ENCODE measurements at regions of chr1 and their contacts with region 1.

Region 1: GRCh38 chr1:113811888-113812660 is at the start of gene RSBN1:
- DNase-seq: peak; percentile 95
- ATAC-seq: peak; percentile 94
- H3K4me3 Mint-ChIP-seq: peak within 1 kb of the TSS; percentile 94
- H3K27ac Mint-ChIP-seq: peak within 1 kb of the TSS; percentile 93
- H3K4me1 Mint-ChIP-seq: peaks cover 41% of the 10 kb centered on the region
- H3K27me3 Mint-ChIP-seq: no peaks in the 10 kb centered on the region
- CTCF ChIP-seq: no peak
- total RNA-seq, gene RSBN1: 26.4 and 29.1 TPM in 2 replicates

Region 2: DNA sequence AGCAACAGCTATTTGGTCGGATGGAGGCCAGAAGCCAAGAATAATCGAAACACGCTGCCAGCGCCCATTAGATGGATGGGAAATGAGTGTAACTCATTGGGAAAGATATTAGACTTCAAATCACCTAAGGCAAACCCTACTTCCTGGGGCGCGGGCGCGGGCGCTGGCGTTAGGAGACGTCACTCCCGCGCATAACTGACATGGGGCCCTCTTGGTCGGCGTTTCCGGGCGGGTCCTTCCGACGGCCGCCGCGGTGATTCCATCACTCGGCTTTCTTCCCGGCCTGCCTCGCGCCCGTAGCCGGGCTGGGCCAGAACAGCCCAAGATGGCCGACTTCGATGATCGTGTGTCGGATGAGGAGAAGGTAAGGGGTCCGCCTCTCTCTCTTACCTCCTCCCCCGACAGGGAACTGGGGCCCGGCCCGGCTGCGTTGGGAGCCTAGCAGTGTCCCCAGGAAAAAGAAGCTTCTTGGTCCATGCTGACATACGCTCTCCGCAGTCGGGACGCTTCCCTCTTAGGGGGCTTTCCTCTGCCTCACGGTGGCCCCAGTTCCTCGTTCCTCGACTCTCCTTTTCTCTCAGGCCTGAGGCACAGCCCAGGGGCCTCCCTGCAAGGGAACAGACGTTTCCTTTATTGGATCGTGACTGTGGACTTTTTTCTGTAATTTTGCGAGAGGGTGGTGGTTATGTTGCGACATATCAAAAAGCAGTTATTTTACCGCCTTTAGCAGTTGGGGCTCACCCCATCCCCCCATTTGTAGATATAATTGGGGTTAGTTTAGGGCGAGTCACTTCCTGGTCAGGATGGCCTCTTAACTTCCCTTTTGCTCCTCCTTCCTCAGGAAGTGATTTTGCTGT is 1192.3 kb before region 1 on chr1 and contains the start of gene CAPZA1:
- CTCF ChIA-PET with region 1: no interaction called
- POLR2A ChIA-PET with region 1: no interaction called
- intact Hi-C with region 1: loop called (anchors 1 kb)
- DNase-seq: peak; percentile 82
- ATAC-seq: peak; percentile 83
- H3K4me3 Mint-ChIP-seq: peak within 1 kb of the TSS; percentile 97
- H3K27ac Mint-ChIP-seq: peak within 1 kb of the TSS; percentile 99
- H3K4me1 Mint-ChIP-seq: peaks cover 54% of the 10 kb centered on the region
- H3K27me3 Mint-ChIP-seq: no peaks in the 10 kb centered on the region
- CTCF ChIP-seq: no peak
- total RNA-seq, gene CAPZA1: 221 and 227 TPM in 2 replicates

Region 3: GRCh38 chr1:113389953-113390834 is 421.9 kb before region 1 on chr1 and contains the start of gene MAGI3:
- CTCF ChIA-PET with region 1: no interaction called
- POLR2A ChIA-PET with region 1: no interaction called
- intact Hi-C with region 1: loop called (anchors 5 kb)
- DNase-seq: peak; percentile 83
- ATAC-seq: peak; percentile 98
- H3K4me3 Mint-ChIP-seq: peak within 1 kb of the TSS; percentile 95
- H3K27ac Mint-ChIP-seq: peak within 1 kb of the TSS; percentile 77
- H3K4me1 Mint-ChIP-seq: peaks cover 18% of the 10 kb centered on the region
- H3K27me3 Mint-ChIP-seq: peaks cover 29% of the 10 kb centered on the region
- CTCF ChIP-seq: no peak
- total RNA-seq, gene MAGI3: 0.83 and 1.0 TPM in 2 replicates

Region 4: DNA sequence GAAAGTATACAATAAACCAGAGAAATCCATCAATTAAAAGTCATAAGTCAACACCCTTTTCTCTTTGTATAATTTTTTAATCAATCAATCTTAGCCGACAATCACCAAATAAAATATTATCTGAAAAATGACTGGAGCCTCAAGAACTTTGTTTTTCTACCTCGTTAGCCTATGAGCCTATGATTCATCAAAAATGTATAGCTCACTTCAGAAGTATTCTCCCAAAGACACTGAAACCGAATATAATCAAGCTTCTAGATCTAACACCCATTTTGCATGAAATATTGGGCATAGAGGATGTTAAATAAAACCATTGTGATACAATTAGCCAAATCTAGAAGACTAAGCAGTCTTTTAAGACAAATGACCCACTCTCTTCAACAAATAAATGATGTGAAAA is 18.0 kb after region 1 on chr1:
- CTCF ChIA-PET with region 1: interaction called, 5 read pairs
- POLR2A ChIA-PET with region 1: no interaction called
- intact Hi-C with region 1: loop called (anchors 1 kb)
- DNase-seq: no peak
- ATAC-seq: no peak
- H3K4me3 Mint-ChIP-seq: no peak overlapping the region
- H3K27ac Mint-ChIP-seq: no peak overlapping the region
- H3K4me1 Mint-ChIP-seq: no peaks in the 10 kb centered on the region
- H3K27me3 Mint-ChIP-seq: no peaks in the 10 kb centered on the region
- CTCF ChIP-seq: no peak

Region 5: DNA sequence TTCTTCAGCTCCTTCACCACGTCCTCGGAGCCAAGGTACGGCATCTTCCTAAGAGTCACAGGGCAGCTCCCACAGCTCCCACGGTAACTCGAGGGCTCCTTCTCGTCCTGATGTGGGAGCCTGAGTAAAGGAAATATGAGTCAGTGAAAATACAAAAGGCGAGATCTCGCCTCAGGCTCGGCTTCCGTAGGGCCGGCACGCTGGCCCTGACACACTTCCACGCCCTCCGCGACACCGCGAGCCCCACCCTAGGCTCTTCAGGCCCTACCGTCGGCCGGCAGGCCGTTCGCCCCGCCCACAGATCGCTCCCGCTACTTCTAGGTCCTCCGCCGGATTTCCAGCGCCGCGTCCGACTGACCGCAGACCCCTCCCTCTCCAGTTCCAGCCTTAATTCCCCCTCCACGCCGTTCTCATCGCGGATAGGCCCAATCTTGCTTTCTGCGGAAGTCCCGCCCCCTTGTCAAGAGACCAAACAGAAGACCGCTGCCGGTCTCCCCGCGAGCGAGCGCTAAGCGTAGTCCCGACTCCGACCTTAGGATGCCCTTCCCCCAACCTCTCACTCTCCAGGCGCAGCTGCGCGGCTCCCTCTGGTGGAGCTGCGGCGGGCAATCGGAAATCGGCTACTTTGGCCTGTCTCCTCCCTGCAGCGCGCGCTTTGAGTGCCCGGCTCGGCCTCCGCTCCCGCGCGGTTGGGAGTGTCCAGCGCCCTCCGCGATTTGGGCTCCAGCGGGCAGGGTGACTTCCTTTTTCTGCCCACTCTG is 92.8 kb after region 1 on chr1 and contains the starts of genes AP4B1 and DCLRE1B:
- CTCF ChIA-PET with region 1: no interaction called
- POLR2A ChIA-PET with region 1: interaction called, 36 read pairs
- intact Hi-C with region 1: loop called (anchors 1 kb)
- DNase-seq: peak; percentile 89
- ATAC-seq: peak; percentile 91
- H3K4me3 Mint-ChIP-seq: peak within 1 kb of the TSS; percentile 94
- H3K27ac Mint-ChIP-seq: peak within 1 kb of the TSS; percentile 95
- H3K4me1 Mint-ChIP-seq: peaks cover 51% of the 10 kb centered on the region
- H3K27me3 Mint-ChIP-seq: no peaks in the 10 kb centered on the region
- CTCF ChIP-seq: no peak
- total RNA-seq, gene AP4B1: 48.5 and 69.9 TPM in 2 replicates
- total RNA-seq, gene DCLRE1B: 5.4 and 6.0 TPM in 2 replicates

Region 6: DNA sequence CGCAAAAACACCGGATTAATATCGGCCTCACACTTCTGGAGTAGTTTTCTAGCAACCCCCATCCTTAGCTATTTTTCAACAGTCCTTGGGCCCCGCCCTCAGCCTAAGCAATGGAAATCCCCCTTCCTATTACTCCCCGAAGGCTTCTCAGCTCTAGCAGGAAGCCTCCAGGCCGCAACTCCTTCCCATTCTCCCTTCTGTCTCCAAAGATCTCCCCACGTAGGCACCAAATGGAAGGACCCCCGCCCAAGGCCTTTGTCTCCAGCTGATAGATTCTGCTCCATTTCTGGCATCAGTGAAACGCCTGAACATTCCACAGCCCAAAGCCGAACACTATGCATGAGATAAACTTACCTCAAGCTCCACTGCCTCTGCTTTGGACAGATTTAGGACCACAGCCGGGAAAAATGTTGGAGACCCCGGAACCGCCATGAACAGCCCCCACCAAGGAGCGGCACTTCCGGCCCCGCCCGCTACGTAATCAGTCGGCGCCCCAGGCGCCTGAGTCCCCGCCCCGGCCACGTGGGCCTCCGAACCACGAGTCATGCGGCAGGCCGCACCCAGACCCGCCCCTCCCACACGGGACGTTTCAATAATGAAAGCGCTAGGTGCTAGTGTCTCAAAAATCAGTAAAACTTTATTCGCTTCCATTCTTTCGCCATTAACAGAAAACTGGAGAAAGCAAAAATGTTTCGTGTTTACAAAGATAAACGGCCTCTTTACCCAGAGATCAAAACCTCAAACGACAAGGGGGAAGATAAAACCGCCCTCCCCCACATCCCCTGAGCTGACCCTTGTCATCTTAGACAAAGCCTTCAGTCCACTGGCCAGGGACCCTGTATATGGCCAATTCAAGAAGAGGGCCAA is 904.5 kb after region 1 on chr1 and contains the start of gene NRAS:
- CTCF ChIA-PET with region 1: no interaction called
- POLR2A ChIA-PET with region 1: interaction called, 3 read pairs
- intact Hi-C with region 1: loop called (anchors 5 kb)
- DNase-seq: peak; percentile 97
- ATAC-seq: peak; percentile 94
- H3K4me3 Mint-ChIP-seq: peak within 1 kb of the TSS; percentile 99
- H3K27ac Mint-ChIP-seq: peak within 1 kb of the TSS; percentile 98
- H3K4me1 Mint-ChIP-seq: peaks cover 28% of the 10 kb centered on the region
- H3K27me3 Mint-ChIP-seq: no peaks in the 10 kb centered on the region
- CTCF ChIP-seq: no peak
- total RNA-seq, gene NRAS: 53.3 and 55.5 TPM in 2 replicates

Measured in activated B cell treated with CpG ODN at 0.5 μM for 24 hours (primary cell).